ENCODE measurements at regions of chr4 and their contacts with region 1.

Region 1: GRCh38 chr4:173318648-173319211 is 15.4 kb downstream of the HMGB2 start:
- DNase-seq: no peak
- H3K4me3 ChIP-seq: no peak overlapping the region
- H3K27ac ChIP-seq: no peak overlapping the region
- H3K4me1 ChIP-seq: no peaks in the 10 kb centered on the region
- H3K27me3 ChIP-seq: no peaks in the 10 kb centered on the region
- CTCF ChIP-seq: peak; percentile 21

Region 2: DNA sequence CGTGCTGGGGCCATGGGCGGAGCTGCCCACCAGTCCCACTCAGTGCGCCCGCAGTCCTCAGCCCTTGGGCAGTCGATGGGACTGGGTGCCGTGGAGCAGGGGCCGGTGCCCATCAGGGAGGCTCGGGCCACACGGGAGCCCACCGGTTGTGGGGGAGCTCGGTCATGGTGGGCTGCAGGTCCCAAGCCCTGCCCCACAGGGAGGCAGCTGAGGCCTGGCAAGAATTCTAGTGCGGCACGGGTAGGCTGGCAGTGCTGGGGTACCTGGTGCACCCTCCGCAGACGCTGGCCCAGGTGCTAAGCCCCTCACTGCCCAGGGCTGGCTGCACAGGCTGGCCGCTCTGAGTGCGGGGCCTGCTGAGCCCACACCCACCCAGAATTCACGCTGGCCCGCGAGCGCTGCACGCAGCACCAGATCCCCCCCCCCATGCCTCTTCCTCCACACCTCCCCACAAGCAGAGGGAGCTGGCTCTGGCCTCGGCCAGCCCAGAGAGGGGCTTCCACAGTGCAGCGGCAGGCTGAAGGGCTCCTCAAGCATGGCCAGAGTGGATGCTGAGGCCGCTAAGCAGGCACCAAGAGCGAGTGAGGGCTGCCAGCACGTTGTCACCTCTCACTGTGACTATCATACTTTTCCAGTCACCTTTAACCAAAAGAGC is 941.1 kb before region 1 on chr4:
- intact Hi-C with region 1: no loop called
- DNase-seq: no peak
- H3K4me3 ChIP-seq: no peak overlapping the region
- H3K27ac ChIP-seq: no peak overlapping the region
- H3K4me1 ChIP-seq: no peaks in the 10 kb centered on the region
- H3K27me3 ChIP-seq: no peaks in the 10 kb centered on the region
- CTCF ChIP-seq: no peak

Region 3: DNA sequence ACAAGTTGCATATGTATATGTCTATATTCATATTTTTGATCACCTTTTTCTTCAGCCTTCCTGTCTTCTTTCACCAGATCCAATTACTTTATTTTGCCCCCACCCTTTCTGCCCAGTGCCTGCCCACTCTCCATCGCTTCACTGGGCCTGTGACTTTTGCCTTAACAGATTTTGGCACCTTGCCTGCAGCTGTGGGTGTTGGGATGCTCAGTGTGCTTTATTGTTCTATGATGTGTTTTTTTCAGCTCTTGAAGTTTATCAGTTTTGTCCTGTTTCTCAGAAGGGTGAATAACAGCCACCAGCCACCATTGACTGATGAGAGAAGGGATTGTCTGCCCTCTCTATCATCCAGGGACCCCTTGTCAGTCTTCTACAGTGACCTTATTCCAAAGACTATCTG is 227.4 kb before region 1 on chr4:
- intact Hi-C with region 1: no loop called
- DNase-seq: no peak
- H3K4me3 ChIP-seq: no peak overlapping the region
- H3K27ac ChIP-seq: no peak overlapping the region
- H3K4me1 ChIP-seq: no peaks in the 10 kb centered on the region
- H3K27me3 ChIP-seq: no peaks in the 10 kb centered on the region
- CTCF ChIP-seq: no peak

Region 4: GRCh38 chr4:173231916-173232315 is 86.8 kb before region 1 on chr4:
- intact Hi-C with region 1: no loop called
- DNase-seq: no peak
- H3K4me3 ChIP-seq: no peak overlapping the region
- H3K27ac ChIP-seq: no peak overlapping the region
- H3K4me1 ChIP-seq: no peaks in the 10 kb centered on the region
- H3K27me3 ChIP-seq: no peaks in the 10 kb centered on the region
- CTCF ChIP-seq: no peak

Region 5: DNA sequence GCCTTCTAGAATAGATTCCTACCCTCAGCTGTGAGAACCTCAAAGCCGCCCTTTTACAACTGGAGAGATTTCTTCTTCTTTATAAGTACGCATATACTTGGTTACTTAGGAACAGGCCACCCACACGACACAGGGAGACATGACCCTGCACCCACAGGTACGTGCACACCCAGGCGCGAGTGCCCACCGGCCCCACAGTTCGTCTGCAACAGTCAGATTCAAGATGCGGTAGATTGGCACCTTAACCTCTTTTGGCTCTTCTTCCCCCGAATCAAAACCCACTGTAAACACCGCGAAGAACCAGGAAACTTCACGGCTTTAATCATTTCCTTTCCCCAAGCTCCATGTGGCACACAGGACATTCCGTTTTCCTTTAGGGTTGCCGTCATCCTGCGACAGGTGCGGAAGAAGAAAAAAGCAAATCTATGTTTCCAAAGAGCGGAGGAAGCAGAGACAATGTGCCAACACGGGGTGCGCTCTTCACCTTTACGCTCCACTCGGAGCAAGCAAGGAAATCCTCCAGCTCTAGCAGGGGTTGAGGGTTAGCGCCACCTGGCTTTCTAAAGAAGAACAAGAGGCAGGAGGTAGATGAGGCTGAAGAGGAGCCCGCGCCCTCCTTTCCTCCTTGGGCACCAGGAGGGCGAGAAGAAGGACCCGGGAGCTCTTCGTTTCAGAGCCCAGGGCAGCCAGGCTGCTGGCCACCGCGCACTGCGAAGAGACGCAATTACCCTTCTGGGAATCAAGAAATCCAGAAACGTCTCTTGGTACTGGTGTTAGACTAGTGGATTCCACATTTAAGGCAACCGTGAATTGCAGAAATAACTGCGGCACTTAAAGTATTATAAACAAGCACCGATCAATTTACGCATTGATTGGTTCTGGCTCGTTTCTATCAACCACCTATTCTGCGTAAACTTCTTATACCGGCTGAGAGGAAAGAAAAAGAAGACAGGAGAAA is 175.6 kb after region 1 on chr4:
- intact Hi-C with region 1: loop called (anchors 10 kb)
- DNase-seq: peak; percentile 78
- H3K4me3 ChIP-seq: peak overlapping the region; percentile 21
- H3K27ac ChIP-seq: no peak overlapping the region
- H3K4me1 ChIP-seq: no peaks in the 10 kb centered on the region
- H3K27me3 ChIP-seq: no peaks in the 10 kb centered on the region
- CTCF ChIP-seq: peak; percentile 72

Measured in colonic mucosa (tissue), 4 donors.